Activated CD4-positive, alpha-beta T cell treated with anti-CD3 and anti-CD28 coated beads for 36 hours (primary cell): ENCODE measurements at regions of chr1 and their contacts with region 1.

Region 1: GRCh38 chr1:211133836-211134669 is at the start of gene KCNH1:
- DNase-seq: peak; percentile 91
- ATAC-seq: peak; percentile 92
- H3K4me3 Mint-ChIP-seq: peak within 1 kb of the TSS; percentile 54
- H3K27ac Mint-ChIP-seq: peak within 1 kb of the TSS; percentile 26
- H3K4me1 Mint-ChIP-seq: peaks cover 13% of the 10 kb centered on the region
- H3K27me3 Mint-ChIP-seq: peaks cover 41% of the 10 kb centered on the region
- total RNA-seq, gene KCNH1: not detected

Region 2: GRCh38 chr1:210328746-210329503 is 805.1 kb before region 1 on chr1 and contains the start of gene HHAT:
- CTCF ChIA-PET with region 1: no interaction called
- POLR2A ChIA-PET with region 1: no interaction called
- intact Hi-C with region 1: loop called in 1 of 2 experiments (anchors 2 kb)
- DNase-seq: peak; percentile 80
- ATAC-seq: peak; percentile 34
- H3K4me3 Mint-ChIP-seq: peak within 1 kb of the TSS; percentile 82
- H3K27ac Mint-ChIP-seq: peak within 1 kb of the TSS; percentile 95
- H3K4me1 Mint-ChIP-seq: peaks cover 36% of the 10 kb centered on the region
- H3K27me3 Mint-ChIP-seq: peaks cover 3% of the 10 kb centered on the region
- total RNA-seq, gene HHAT: 0.82 to 0.84 TPM

Region 3: DNA sequence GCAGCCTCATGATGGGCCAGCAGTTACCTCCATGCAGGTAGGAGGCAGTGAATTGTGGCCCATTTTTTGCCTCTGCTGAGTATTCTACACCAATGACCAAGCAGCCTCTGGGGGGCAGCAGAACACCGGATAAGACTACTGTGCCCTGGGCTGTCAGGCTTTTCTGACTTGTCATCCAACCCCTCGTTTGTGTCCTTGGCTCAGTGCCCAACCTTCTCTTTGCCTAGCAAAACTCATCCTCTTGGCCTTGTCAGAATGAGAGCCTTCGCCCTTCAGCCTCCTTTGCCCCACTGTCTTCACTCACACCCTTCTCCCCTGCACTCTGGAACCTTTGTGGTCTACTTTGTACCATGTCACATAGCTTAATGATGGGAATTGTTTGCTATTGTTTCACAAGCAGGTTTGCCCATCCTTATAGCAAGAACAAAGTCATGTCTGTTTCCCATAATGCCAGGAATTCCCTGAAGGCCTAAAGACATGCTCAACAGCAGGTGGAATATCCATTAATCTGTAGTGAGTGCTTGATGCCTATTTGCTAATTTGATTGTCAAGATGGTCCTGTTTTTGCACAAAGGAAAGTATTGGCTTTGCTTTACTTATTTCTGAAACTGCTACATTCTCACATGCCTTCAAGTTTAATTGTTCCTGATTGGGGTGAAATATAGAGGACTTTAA is 549.5 kb before region 1 on chr1:
- CTCF ChIA-PET with region 1: interaction called, 11 read pairs
- POLR2A ChIA-PET with region 1: no interaction called
- intact Hi-C with region 1: loop called (anchors 1 kb)
- DNase-seq: peak; percentile 91
- ATAC-seq: peak; percentile 96
- H3K4me3 Mint-ChIP-seq: no peak overlapping the region
- H3K27ac Mint-ChIP-seq: no peak overlapping the region
- H3K4me1 Mint-ChIP-seq: peaks cover 7% of the 10 kb centered on the region
- H3K27me3 Mint-ChIP-seq: no peaks in the 10 kb centered on the region

Region 4: GRCh38 chr1:210850556-210850955 is 283.5 kb before region 1 on chr1:
- CTCF ChIA-PET with region 1: no interaction called
- POLR2A ChIA-PET with region 1: no interaction called
- intact Hi-C with region 1: no loop called
- DNase-seq: no peak
- ATAC-seq: peak; percentile 19
- H3K4me3 Mint-ChIP-seq: no peak overlapping the region
- H3K27ac Mint-ChIP-seq: no peak overlapping the region
- H3K4me1 Mint-ChIP-seq: no peaks in the 10 kb centered on the region
- H3K27me3 Mint-ChIP-seq: no peaks in the 10 kb centered on the region

Region 5: GRCh38 chr1:210951279-210951678 is 182.8 kb before region 1 on chr1:
- CTCF ChIA-PET with region 1: interaction called, 4 read pairs
- POLR2A ChIA-PET with region 1: no interaction called
- intact Hi-C with region 1: loop called in 1 of 2 experiments (anchors 5 kb)
- DNase-seq: no peak
- ATAC-seq: no peak
- H3K4me3 Mint-ChIP-seq: no peak overlapping the region
- H3K27ac Mint-ChIP-seq: no peak overlapping the region
- H3K4me1 Mint-ChIP-seq: no peaks in the 10 kb centered on the region
- H3K27me3 Mint-ChIP-seq: peaks cover 6% of the 10 kb centered on the region

Region 6: GRCh38 chr1:211229365-211229759 is 95.3 kb after region 1 on chr1:
- CTCF ChIA-PET with region 1: interaction called, 3 read pairs
- POLR2A ChIA-PET with region 1: interaction called, 4 read pairs
- intact Hi-C with region 1: loop called in 1 of 2 experiments (anchors 1 kb)
- DNase-seq: no peak
- ATAC-seq: peak; percentile 65
- H3K4me3 Mint-ChIP-seq: peak overlapping the region; percentile 25
- H3K27ac Mint-ChIP-seq: peak overlapping the region; percentile 61
- H3K4me1 Mint-ChIP-seq: peaks cover 25% of the 10 kb centered on the region
- H3K27me3 Mint-ChIP-seq: no peaks in the 10 kb centered on the region